ENCODE measurements at regions of chr7 and their contacts with region 1.

Region 1: GRCh38 chr7:12638851-12639467 is 48.5 kb upstream of the ARL4A start:
- DNase-seq: no peak
- ATAC-seq: peak; percentile 55

Region 2: DNA sequence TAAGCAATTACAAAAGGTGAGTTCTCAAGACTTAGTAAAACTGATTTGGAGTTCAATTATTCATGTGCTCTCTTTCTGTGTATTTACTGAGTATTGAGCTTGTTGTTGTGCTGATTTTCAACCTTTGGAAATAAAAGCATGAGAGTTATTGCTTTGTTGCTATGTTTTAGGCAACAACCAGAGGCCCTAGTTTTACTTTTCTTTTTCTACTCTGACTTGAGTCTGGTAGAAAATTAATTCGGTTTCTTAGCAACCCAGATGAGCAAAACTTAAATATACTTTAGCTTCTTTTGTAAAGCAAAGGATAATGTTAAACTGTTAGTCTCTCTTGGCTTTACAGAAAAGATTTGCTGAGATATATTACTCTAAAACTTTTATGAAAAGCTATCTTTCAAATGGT is 134.8 kb before region 1 on chr7:
- intact Hi-C with region 1: no loop called
- DNase-seq: no peak
- ATAC-seq: no peak

Region 3: GRCh38 chr7:13262929-13263530 is 624.1 kb after region 1 on chr7:
- intact Hi-C with region 1: loop called (anchors 2 kb)
- DNase-seq: no peak
- ATAC-seq: peak; percentile 68

Measured in Right ventricle myocardium superior (tissue), 1 donor.